CD4-positive, alpha-beta memory T cell (primary cell): ENCODE measurements at regions of chr9 and their contacts with region 1.

Region 1: DNA sequence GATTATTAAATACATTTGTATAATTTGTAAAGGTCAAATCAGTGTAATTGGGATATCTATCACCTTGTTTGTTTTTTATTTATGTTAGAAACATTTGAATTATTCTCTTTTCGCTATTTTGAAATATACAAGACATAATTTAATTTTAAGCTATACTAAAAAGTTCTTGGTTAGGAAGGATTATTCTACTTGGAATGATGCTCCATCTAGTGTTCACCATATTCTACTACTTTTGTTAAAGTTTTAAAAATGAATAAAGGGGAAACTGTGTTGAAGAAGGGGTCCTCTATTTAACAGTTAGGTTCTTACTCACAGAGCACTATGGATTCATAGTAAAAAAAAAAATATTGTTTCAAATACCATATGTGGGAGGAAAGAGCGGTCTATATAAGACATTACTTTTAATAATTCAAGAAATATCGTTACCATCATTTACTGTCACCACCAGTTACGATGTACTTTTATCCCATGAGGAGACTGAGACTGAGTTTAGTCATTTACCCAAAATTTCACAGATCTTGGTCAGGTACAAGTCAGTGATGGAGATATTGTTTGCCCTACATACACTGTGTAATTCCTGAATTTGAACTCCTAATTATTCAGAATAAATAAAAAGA is 6.3 kb upstream of the STOM start:
- DNase-seq: peak in 3 of 5 donors; percentile 24 to 30 (median 29)
- H3K4me3 ChIP-seq: no peak overlapping the region
- H3K4me3 Mint-ChIP-seq: no peak overlapping the region
- H3K27ac ChIP-seq: no peak overlapping the region
- H3K27ac Mint-ChIP-seq: no peak overlapping the region
- H3K4me1 ChIP-seq: peaks cover 3% of the 10 kb centered on the region
- H3K4me1 Mint-ChIP-seq: peaks cover 9 to 21% (median 10%) of the 10 kb centered on the region in 4 donors
- H3K27me3 ChIP-seq: no peaks in the 10 kb centered on the region
- H3K27me3 Mint-ChIP-seq: no peaks in the 10 kb centered on the region

Region 2: GRCh38 chr9:120482424-120483186 is 893.7 kb before region 1 on chr9:
- CTCF ChIA-PET with region 1: no interaction called
- POLR2A ChIA-PET with region 1: no interaction called
- intact Hi-C with region 1: no loop called
- DNase-seq: no peak
- H3K4me3 ChIP-seq: no peak overlapping the region
- H3K4me3 Mint-ChIP-seq: no peak overlapping the region
- H3K27ac ChIP-seq: no peak overlapping the region
- H3K27ac Mint-ChIP-seq: peak overlapping the region in 1 of 7 donors; percentile 62
- H3K4me1 ChIP-seq: no peaks in the 10 kb centered on the region
- H3K4me1 Mint-ChIP-seq: peaks cover 0 to 2% (median 0%) of the 10 kb centered on the region in 4 donors
- H3K27me3 ChIP-seq: no peaks in the 10 kb centered on the region
- H3K27me3 Mint-ChIP-seq: no peaks in the 10 kb centered on the region

Region 3: DNA sequence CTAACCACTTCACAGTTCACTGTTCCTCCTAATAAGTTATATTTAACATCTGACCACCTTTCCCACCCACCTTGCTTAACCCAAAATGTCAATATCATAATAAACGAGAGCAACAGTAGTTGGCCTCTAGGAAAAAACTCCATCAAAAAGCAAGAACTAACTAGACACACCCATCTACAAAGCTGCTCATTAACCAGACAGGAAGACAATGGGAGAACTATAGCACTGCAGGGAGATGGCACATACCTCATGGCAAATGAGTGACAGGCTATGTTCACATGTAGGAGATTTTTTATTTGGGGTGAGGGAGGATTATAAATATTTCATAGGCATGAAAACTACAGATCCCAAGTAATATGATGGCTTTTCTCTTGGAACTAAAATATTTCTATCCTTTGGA is 772.7 kb before region 1 on chr9:
- CTCF ChIA-PET with region 1: no interaction called
- POLR2A ChIA-PET with region 1: no interaction called
- intact Hi-C with region 1: no loop called
- DNase-seq: no peak
- H3K4me3 ChIP-seq: no peak overlapping the region
- H3K4me3 Mint-ChIP-seq: no peak overlapping the region
- H3K27ac ChIP-seq: no peak overlapping the region
- H3K27ac Mint-ChIP-seq: no peak overlapping the region
- H3K4me1 ChIP-seq: no peaks in the 10 kb centered on the region
- H3K4me1 Mint-ChIP-seq: peaks cover 0 to 2% (median 1%) of the 10 kb centered on the region in 4 donors
- H3K27me3 ChIP-seq: no peaks in the 10 kb centered on the region
- H3K27me3 Mint-ChIP-seq: no peaks in the 10 kb centered on the region

Region 4: GRCh38 chr9:121316852-121317373 is 59.4 kb before region 1 on chr9:
- CTCF ChIA-PET with region 1: interaction called, 272 read pairs
- POLR2A ChIA-PET with region 1: interaction called, 15 read pairs
- intact Hi-C with region 1: loop called (anchors 1 kb)
- DNase-seq: no peak
- H3K4me3 ChIP-seq: no peak overlapping the region
- H3K4me3 Mint-ChIP-seq: no peak overlapping the region
- H3K27ac ChIP-seq: no peak overlapping the region
- H3K27ac Mint-ChIP-seq: no peak overlapping the region
- H3K4me1 ChIP-seq: peaks cover 14% of the 10 kb centered on the region
- H3K4me1 Mint-ChIP-seq: peaks cover 7 to 17% (median 12%) of the 10 kb centered on the region in 4 donors
- H3K27me3 ChIP-seq: no peaks in the 10 kb centered on the region
- H3K27me3 Mint-ChIP-seq: no peaks in the 10 kb centered on the region